PC-3 (cell line): ENCODE measurements at regions of chr3 and their contacts with region 1.

Region 1: DNA sequence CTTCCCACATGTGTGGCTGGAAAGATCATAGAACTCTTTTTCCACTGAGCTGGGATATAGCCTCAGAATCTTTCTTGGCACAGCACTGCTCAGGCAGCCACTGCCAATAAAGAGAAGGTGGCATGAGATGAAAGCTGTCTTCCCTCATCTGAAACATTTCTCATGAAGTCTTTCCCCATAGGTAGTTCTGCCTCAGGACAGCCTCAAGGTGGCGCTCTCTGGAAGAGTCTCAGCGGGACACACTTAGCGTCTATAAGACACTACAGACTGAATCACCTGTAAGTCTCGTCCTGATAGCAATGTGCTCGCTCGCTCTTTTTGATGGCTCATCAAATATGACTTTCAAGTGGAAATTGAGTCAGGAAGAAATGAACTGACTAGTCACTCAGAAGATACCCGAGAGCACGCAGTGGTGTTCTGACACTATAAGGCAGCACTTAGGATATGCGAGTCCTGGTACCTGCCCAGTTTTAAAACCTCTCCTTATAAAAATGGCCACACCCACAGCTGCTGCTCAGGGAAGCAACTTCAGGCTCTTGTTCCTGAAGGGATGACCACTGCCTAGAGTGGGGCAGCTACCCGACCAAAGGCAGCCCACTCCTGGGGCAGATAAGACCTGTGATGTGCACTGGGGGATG is 269.5 kb downstream of the SUCLG2 start:
- DNase-seq: peak; percentile 52
- ATAC-seq: peak; percentile 71
- H3K4me3 ChIP-seq: no peak overlapping the region
- H3K27ac ChIP-seq: no peak overlapping the region
- H3K4me1 ChIP-seq: no peaks in the 10 kb centered on the region
- H3K27me3 ChIP-seq: no peaks in the 10 kb centered on the region
- CTCF ChIP-seq: peak; percentile 68

Region 2: DNA sequence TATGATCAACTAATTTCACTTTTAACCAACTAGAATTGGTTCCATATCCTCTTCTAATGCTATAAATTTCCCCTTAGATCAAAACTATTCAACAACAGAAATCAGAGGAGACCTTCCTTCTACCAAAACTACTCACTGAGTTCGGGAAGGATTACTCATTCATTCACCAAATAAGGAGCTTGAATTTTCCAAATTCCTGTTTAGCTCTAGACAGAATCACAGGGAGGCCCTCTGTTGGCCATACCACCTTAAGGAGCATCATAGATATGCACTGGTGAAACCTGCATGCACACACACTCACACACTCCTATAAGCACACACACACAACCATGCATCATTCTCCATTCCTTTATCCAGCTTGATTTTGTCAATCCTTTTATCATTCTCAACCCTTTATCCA is 220.5 kb after region 1 on chr3:
- CTCF ChIA-PET with region 1: no interaction called
- POLR2A ChIA-PET with region 1: no interaction called
- intact Hi-C with region 1: loop called (anchors 10 kb)
- DNase-seq: peak; percentile 69
- ATAC-seq: peak; percentile 72
- H3K4me3 ChIP-seq: no peak overlapping the region
- H3K27ac ChIP-seq: peak overlapping the region; percentile 39; the same call in 1 of the 2 replicates
- H3K4me1 ChIP-seq: peaks cover 40% of the 10 kb centered on the region
- H3K27me3 ChIP-seq: no peaks in the 10 kb centered on the region
- CTCF ChIP-seq: peak; percentile 42

Region 3: GRCh38 chr3:67662733-67663132 is 277.9 kb after region 1 on chr3:
- CTCF ChIA-PET with region 1: no interaction called
- POLR2A ChIA-PET with region 1: no interaction called
- intact Hi-C with region 1: no loop called
- DNase-seq: no peak
- ATAC-seq: no peak
- H3K4me3 ChIP-seq: no peak overlapping the region
- H3K27ac ChIP-seq: no peak overlapping the region
- H3K4me1 ChIP-seq: no peaks in the 10 kb centered on the region
- H3K27me3 ChIP-seq: no peaks in the 10 kb centered on the region
- CTCF ChIP-seq: no peak

Region 4: DNA sequence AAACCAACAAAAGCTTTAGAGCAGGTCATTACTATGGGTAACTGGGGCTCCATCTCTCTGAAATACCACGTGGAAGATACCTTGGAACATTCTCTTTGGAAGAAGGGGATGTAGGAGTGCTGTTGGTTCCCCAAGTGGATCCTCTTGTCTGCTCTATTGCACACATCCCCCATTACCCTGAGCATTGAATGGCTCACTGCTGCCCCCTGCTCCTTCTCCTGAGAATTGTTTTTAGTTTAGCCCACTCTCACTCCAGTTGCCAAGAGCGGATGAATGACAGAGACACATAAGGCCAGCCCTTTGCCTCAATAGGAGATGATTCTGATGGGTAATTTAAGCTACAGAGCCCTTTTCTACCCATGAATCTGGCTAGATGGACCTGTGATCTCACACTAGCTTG is 405.2 kb after region 1 on chr3:
- CTCF ChIA-PET with region 1: no interaction called
- POLR2A ChIA-PET with region 1: no interaction called
- intact Hi-C with region 1: loop called (anchors 5 kb)
- DNase-seq: peak; percentile 49
- ATAC-seq: peak; percentile 59; the same call in 1 of the 2 replicates
- H3K4me3 ChIP-seq: no peak overlapping the region
- H3K27ac ChIP-seq: no peak overlapping the region
- H3K4me1 ChIP-seq: peaks cover 8% of the 10 kb centered on the region
- H3K27me3 ChIP-seq: no peaks in the 10 kb centered on the region
- CTCF ChIP-seq: peak; percentile 58

Region 5: DNA sequence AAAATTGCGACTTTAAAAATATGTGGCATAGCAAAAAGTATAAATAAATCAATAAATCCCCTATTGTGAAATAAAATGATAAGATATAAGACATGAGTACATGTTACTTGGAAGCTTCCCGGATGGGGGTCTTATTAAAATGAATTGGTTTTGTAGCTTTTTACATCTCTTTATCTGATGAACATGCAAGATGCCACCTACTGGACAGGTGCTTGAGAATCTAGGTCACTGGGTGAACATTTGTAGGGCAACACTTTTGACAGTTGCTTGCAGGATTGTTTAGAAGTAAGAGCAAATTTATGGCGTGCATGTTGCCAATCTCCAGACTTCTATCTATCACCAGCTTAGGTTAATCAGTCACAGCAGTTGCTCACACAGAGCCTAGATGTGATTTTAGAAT is 632.2 kb after region 1 on chr3:
- CTCF ChIA-PET with region 1: no interaction called
- POLR2A ChIA-PET with region 1: interaction called, 6 read pairs
- intact Hi-C with region 1: loop called (anchors 5 kb)
- DNase-seq: peak; percentile 7
- ATAC-seq: no peak
- H3K4me3 ChIP-seq: no peak overlapping the region
- H3K27ac ChIP-seq: no peak overlapping the region
- H3K4me1 ChIP-seq: no peaks in the 10 kb centered on the region
- H3K27me3 ChIP-seq: no peaks in the 10 kb centered on the region
- CTCF ChIP-seq: peak; percentile 46

Region 6: GRCh38 chr3:68256635-68257223 is 871.9 kb after region 1 on chr3:
- CTCF ChIA-PET with region 1: no interaction called
- POLR2A ChIA-PET with region 1: no interaction called
- intact Hi-C with region 1: loop called (anchors 10 kb)
- DNase-seq: peak; percentile 1
- ATAC-seq: no peak
- H3K4me3 ChIP-seq: no peak overlapping the region
- H3K27ac ChIP-seq: no peak overlapping the region
- H3K4me1 ChIP-seq: no peaks in the 10 kb centered on the region
- H3K27me3 ChIP-seq: no peaks in the 10 kb centered on the region
- CTCF ChIP-seq: peak; percentile 35; the same call in 1 of the 2 replicates